ENCODE measurements at regions of chr22 and their contacts with region 1.

Region 1: GRCh38 chr22:45506856-45507370 is 4.2 kb downstream of the FBLN1 start:
- DNase-seq: no peak
- H3K4me3 Mint-ChIP-seq: no peak overlapping the region
- H3K27ac Mint-ChIP-seq: no peak overlapping the region
- H3K4me1 Mint-ChIP-seq: peaks cover 8% of the 10 kb centered on the region
- H3K27me3 Mint-ChIP-seq: peaks cover 19% of the 10 kb centered on the region

Region 2: GRCh38 chr22:45493286-45493771 is 13.6 kb before region 1 on chr22:
- CTCF ChIA-PET with region 1: no interaction called
- intact Hi-C with region 1: loop called (anchors 1 kb)
- DNase-seq: no peak
- H3K4me3 Mint-ChIP-seq: no peak overlapping the region
- H3K27ac Mint-ChIP-seq: no peak overlapping the region
- H3K4me1 Mint-ChIP-seq: no peaks in the 10 kb centered on the region
- H3K27me3 Mint-ChIP-seq: peaks cover 15% of the 10 kb centered on the region

Region 3: DNA sequence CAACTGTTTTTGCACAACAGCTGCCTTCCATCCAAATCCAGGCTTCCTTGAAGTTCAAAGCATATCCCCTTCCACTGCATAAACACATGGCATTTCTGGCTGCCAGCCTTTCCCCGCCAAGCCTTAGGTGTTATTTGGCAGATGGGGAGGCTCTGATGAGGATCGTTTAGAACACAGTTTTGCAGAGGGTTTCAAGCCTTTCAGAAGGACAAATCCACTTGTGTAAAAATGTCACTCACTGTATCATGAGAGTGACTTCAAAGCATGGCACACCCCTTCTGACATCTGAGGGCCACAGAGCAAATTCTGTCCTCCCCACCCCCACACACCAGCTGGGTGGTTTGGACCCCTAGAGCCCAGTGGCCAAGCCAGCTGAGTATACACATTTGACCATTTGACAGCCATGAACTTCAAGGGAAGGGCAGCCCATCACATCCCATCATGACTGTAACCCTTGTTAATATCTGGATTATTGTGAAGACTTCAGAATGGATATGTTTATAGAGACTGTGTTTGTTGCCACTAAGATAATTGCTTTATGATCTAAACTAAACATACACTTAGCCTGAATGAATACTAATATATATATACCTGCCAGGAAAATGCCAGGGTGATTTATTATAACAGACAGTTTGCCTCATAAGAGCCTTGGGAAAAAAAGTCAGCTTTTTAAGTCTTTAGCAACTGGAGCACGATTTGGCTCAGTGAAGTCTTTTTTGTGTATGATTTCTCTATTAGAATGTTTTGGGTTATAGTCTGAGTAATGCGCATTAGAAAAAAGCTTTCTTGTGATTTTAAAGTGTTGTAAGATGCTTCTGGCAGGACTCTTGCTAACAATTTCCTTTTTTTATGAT is 27.7 kb after region 1 on chr22:
- CTCF ChIA-PET with region 1: no interaction called
- intact Hi-C with region 1: no loop called
- DNase-seq: no peak
- H3K4me3 Mint-ChIP-seq: no peak overlapping the region
- H3K27ac Mint-ChIP-seq: no peak overlapping the region
- H3K4me1 Mint-ChIP-seq: no peaks in the 10 kb centered on the region
- H3K27me3 Mint-ChIP-seq: peaks cover 2% of the 10 kb centered on the region